Heart left ventricle (tissue), 16 donors: ENCODE measurements at regions of chr13 and their contacts with region 1.

Region 1: DNA sequence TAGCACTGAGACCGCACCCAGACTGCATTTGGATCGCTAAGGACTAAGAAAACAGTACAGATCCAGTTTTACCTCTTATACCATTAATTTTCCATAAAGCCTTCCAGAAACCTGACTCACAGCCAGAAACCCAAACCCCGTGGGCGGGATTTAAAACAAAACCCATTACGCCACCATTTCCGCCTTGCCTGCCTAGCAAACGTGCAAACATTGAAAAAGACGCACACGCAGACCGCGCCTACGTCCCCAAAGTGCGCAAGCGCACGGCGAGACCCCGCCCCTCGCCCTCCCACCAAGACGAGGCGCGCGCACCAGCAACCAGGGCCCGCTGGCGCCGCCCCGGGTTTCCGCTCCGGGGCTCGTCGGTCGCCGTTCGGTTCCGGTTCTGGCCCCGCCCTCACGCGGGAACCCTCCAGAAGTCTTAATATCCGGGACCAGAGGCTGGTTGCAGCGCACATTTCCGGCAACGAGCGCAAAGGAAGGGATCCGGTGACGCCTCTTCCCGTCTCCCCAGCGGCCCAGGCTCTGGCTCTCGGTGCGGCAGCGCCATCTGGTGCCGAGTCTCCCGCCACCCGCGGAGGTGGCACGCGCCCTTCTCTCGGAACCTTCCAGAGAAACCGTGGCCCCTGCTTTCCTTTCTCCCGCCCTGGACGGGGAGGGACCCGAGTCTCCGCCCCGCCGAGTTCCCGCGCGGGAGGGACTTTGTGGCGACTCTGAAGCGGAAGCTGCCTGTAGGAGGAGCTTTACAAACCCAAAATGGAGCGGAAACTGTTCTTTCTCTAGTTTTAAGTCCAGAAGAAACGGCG is 256.9 kb upstream of the STARD13 start:
- DNase-seq: peak; percentile 98 to 99 (median 99)
- ATAC-seq: peak; percentile 92 to 98 (median 94)
- H3K4me3 ChIP-seq: peak overlapping the region; percentile 29 to 63 (median 54)
- H3K27ac ChIP-seq: peak overlapping the region; percentile 94 to 100 (median 97)
- H3K4me1 ChIP-seq: peaks cover 6 to 50% (median 26%) of the 10 kb centered on the region in 12 donors
- H3K27me3 ChIP-seq: no peaks in the 10 kb centered on the region
- CTCF ChIP-seq: peak; percentile 85 to 98 (median 92)
- POLR2A ChIP-seq: peak in 1 of 2 donors; percentile 56

Region 2: DNA sequence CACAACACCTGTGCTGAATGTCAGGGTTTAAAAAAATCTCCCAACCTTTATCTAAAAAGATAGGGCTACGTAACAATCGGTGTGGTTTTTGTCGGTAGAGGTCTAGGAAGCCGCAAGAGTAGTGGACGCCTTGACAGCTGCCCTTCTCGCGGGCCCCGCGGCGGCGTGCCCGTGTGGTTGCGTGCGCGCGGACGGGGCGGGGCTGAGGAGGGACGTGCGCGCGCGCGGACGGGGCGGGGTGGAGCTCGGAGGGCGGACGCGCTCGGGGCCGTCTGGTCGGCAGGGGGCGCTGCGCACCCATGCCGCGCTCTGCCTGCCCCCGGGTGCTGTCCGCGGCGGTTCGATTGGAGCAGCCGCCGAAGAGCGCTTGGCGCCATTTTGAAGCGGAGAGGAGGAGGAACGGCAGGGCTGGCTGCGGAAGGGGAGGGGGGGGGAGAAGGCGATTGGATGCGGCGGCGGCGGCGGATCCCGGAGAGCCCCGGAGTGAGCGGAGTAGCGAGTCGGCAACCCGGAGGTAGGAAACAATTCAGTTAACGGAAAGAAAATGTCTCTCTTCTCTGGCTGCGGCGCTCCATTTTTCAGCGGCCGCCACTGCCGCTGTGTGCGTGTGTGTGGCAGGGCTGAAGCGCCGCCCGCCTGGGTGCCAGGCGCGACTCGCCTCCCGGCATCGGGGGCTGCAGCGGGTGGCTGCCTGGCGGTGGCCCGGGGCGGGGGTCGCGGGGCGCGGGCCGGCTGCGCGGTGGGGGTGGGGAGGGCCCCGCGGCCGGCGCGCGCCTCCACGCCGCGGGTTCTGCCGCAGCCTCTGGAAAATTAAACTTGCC is 956.2 kb before region 1 on chr13 and contains the start of gene PDS5B:
- intact Hi-C with region 1: loop called in 7 of 10 experiments (anchors 2 to 5 kb)
- DNase-seq: peak; percentile 95 to 98 (median 96)
- ATAC-seq: peak; percentile 95 to 99 (median 96)
- H3K4me3 ChIP-seq: peak within 1 kb of the TSS; percentile 66 to 95 (median 84)
- H3K27ac ChIP-seq: peak within 1 kb of the TSS; percentile 86 to 96 (median 93)
- H3K4me1 ChIP-seq: peaks cover 0 to 38% (median 27%) of the 10 kb centered on the region in 12 donors
- H3K27me3 ChIP-seq: no peaks in the 10 kb centered on the region
- CTCF ChIP-seq: peak; percentile 66 to 97 (median 94)
- POLR2A ChIP-seq: peak in 1 of 2 donors; percentile 81
- total RNA-seq, gene PDS5B: 12.0 to 28.8 (median 19.4) TPM

Region 3: GRCh38 chr13:33017323-33017929 is 525.1 kb before region 1 on chr13:
- intact Hi-C with region 1: loop called in 2 of 10 experiments (anchors 5 to 10 kb)
- DNase-seq: peak in 4 of 5 donors; percentile 50 to 57 (median 56)
- ATAC-seq: peak; percentile 73 to 87 (median 86)
- H3K4me3 ChIP-seq: peak overlapping the region; percentile 42 to 69 (median 63)
- H3K27ac ChIP-seq: peak overlapping the region; percentile 68 to 93 (median 88)
- H3K4me1 ChIP-seq: peaks cover 0 to 24% (median 11%) of the 10 kb centered on the region in 12 donors
- H3K27me3 ChIP-seq: peaks cover 0 to 33% (median 0%) of the 10 kb centered on the region in 9 donors
- CTCF ChIP-seq: peak; percentile 43 to 74 (median 65)
- POLR2A ChIP-seq: peak in 1 of 2 donors; percentile 41

Region 4: GRCh38 chr13:33228648-33229445 is 313.6 kb before region 1 on chr13:
- intact Hi-C with region 1: loop called in 9 of 10 experiments (anchors 2 to 10 kb)
- DNase-seq: no peak
- ATAC-seq: peak in 2 of 4 donors; percentile 42 to 43
- H3K4me3 ChIP-seq: no peak overlapping the region
- H3K27ac ChIP-seq: peak overlapping the region; percentile 14 to 75 (median 63)
- H3K4me1 ChIP-seq: peaks cover 7 to 74% (median 47%) of the 10 kb centered on the region in 12 donors
- H3K27me3 ChIP-seq: no peaks in the 10 kb centered on the region
- CTCF ChIP-seq: peak; percentile 83 to 98 (median 93)
- POLR2A ChIP-seq: no peak

Region 5: GRCh38 chr13:33367926-33368325 is 174.6 kb before region 1 on chr13:
- intact Hi-C with region 1: no loop called
- DNase-seq: no peak
- ATAC-seq: peak in 2 of 4 donors; percentile 29 to 48
- H3K4me3 ChIP-seq: no peak overlapping the region
- H3K27ac ChIP-seq: peak overlapping the region in 3 of 12 donors; percentile 10 to 48 (median 23)
- H3K4me1 ChIP-seq: peaks cover 0 to 26% (median 0%) of the 10 kb centered on the region in 12 donors
- H3K27me3 ChIP-seq: no peaks in the 10 kb centered on the region
- CTCF ChIP-seq: no peak
- POLR2A ChIP-seq: no peak

Region 6: GRCh38 chr13:33494596-33495204 is 47.8 kb before region 1 on chr13:
- intact Hi-C with region 1: loop called in 2 of 10 experiments (anchors 5 kb)
- DNase-seq: peak in 3 of 5 donors; percentile 15 to 57 (median 37)
- ATAC-seq: peak; percentile 62 to 94 (median 91)
- H3K4me3 ChIP-seq: no peak overlapping the region
- H3K27ac ChIP-seq: peak overlapping the region in 11 of 12 donors; percentile 23 to 85 (median 55)
- H3K4me1 ChIP-seq: peaks cover 0 to 31% (median 19%) of the 10 kb centered on the region in 12 donors
- H3K27me3 ChIP-seq: no peaks in the 10 kb centered on the region
- CTCF ChIP-seq: no peak
- POLR2A ChIP-seq: no peak

Region 7: DNA sequence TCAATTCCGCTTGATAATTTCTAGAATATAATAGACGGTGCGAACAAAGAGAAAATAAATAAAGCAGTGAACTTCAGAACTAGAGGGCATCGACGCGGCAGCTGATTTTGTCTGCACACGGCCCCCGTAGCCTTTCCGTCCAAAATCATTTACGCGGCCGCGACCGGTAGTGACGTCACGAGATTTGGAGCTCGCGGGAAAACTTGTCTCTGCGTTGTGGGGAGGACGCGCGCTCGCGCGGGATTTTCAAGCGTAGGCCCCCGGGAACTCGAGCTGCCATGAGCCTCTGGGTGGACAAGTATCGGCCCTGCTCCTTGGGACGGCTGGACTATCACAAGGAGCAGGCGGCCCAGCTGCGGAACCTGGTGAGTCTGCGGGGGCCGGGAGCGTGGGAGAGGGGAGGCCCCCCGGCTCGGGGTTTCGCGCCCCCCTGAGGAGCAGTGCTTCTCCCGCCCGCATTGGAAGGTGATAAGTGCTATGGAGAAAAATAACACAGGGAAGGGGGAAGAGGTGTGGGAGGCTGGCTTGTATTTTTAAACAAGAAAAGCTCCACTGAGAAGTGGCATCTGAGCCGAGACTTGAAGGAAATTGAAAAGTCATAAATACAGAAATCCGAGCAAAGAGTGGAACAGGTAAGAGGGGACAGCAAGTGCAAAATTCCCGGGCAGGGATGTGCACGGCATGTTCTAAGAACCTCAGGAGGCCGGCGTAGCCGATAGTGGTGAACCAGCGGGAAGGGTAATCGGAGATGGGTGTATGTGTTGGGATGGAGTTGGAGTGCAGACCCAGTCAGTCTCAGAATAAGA is 275.6 kb after region 1 on chr13 and contains the start of gene RFC3:
- intact Hi-C with region 1: loop called in 1 of 10 experiments (anchors 10 kb)
- DNase-seq: peak; percentile 94 to 96 (median 95)
- ATAC-seq: peak; percentile 92 to 98 (median 96)
- H3K4me3 ChIP-seq: peak within 1 kb of the TSS; percentile 62 to 95 (median 80)
- H3K27ac ChIP-seq: peak within 1 kb of the TSS; percentile 18 to 84 (median 72)
- H3K4me1 ChIP-seq: peaks cover 0 to 16% (median 7%) of the 10 kb centered on the region in 12 donors
- H3K27me3 ChIP-seq: no peaks in the 10 kb centered on the region
- CTCF ChIP-seq: no peak
- POLR2A ChIP-seq: peak in 1 of 2 donors; percentile 42
- total RNA-seq, gene RFC3: 3.4 to 8.8 (median 5.7) TPM